ENCODE measurements at regions of chr1 and their contacts with region 1.

Region 1: GRCh38 chr1:16009030-16009709 is 5.1 kb downstream of the SRARP start:
- DNase-seq: peak; percentile 82 to 91 (median 89)
- H3K4me3 ChIP-seq: no peak overlapping the region
- H3K27ac ChIP-seq: no peak overlapping the region
- H3K4me1 ChIP-seq: peaks cover 7% of the 10 kb centered on the region
- H3K27me3 ChIP-seq: no peaks in the 10 kb centered on the region
- CTCF ChIP-seq: peak; percentile 84 to 98 (median 97)
- EP300 ChIP-seq: no peak
- POLR2A ChIP-seq: no peak

Region 2: GRCh38 chr1:16032388-16033103 is 23.4 kb after region 1 on chr1:
- intact Hi-C with region 1: loop called in 3 of 4 experiments (anchors 1 to 2 kb)
- DNase-seq: peak; percentile 88 to 92 (median 89)
- H3K4me3 ChIP-seq: no peak overlapping the region
- H3K27ac ChIP-seq: no peak overlapping the region
- H3K4me1 ChIP-seq: peaks cover 4% of the 10 kb centered on the region
- H3K27me3 ChIP-seq: no peaks in the 10 kb centered on the region
- CTCF ChIP-seq: peak; percentile 97 to 99 (median 98)
- EP300 ChIP-seq: no peak
- POLR2A ChIP-seq: no peak

Region 3: GRCh38 chr1:16048573-16049189 is 39.5 kb after region 1 on chr1:
- intact Hi-C with region 1: loop called in 1 of 4 experiments (anchors 5 kb)
- DNase-seq: peak; percentile 77 to 84 (median 81)
- H3K4me3 ChIP-seq: peak overlapping the region; percentile 27
- H3K27ac ChIP-seq: no peak overlapping the region
- H3K4me1 ChIP-seq: peaks cover 2% of the 10 kb centered on the region
- H3K27me3 ChIP-seq: no peaks in the 10 kb centered on the region
- CTCF ChIP-seq: no peak
- EP300 ChIP-seq: no peak
- POLR2A ChIP-seq: no peak

Region 4: GRCh38 chr1:16055613-16056520 is 46.7 kb after region 1 on chr1:
- intact Hi-C with region 1: loop called in 3 of 4 experiments (anchors 2 to 5 kb)
- DNase-seq: peak; percentile 82 to 91 (median 89)
- H3K4me3 ChIP-seq: no peak overlapping the region
- H3K27ac ChIP-seq: no peak overlapping the region
- H3K4me1 ChIP-seq: no peaks in the 10 kb centered on the region
- H3K27me3 ChIP-seq: no peaks in the 10 kb centered on the region
- CTCF ChIP-seq: peak; percentile 92 to 96 (median 96)
- EP300 ChIP-seq: no peak
- POLR2A ChIP-seq: no peak

Region 5: GRCh38 chr1:16145662-16146278 is 136.6 kb after region 1 on chr1:
- intact Hi-C with region 1: no loop called
- DNase-seq: peak; percentile 65 to 79 (median 69)
- H3K4me3 ChIP-seq: peak overlapping the region; percentile 25
- H3K27ac ChIP-seq: peak overlapping the region; percentile 26 to 75
- H3K4me1 ChIP-seq: peaks cover 21% of the 10 kb centered on the region
- H3K27me3 ChIP-seq: no peaks in the 10 kb centered on the region
- CTCF ChIP-seq: peak in 1 of 3 donors; percentile 4
- EP300 ChIP-seq: no peak
- POLR2A ChIP-seq: peak; percentile 8

Region 6: DNA sequence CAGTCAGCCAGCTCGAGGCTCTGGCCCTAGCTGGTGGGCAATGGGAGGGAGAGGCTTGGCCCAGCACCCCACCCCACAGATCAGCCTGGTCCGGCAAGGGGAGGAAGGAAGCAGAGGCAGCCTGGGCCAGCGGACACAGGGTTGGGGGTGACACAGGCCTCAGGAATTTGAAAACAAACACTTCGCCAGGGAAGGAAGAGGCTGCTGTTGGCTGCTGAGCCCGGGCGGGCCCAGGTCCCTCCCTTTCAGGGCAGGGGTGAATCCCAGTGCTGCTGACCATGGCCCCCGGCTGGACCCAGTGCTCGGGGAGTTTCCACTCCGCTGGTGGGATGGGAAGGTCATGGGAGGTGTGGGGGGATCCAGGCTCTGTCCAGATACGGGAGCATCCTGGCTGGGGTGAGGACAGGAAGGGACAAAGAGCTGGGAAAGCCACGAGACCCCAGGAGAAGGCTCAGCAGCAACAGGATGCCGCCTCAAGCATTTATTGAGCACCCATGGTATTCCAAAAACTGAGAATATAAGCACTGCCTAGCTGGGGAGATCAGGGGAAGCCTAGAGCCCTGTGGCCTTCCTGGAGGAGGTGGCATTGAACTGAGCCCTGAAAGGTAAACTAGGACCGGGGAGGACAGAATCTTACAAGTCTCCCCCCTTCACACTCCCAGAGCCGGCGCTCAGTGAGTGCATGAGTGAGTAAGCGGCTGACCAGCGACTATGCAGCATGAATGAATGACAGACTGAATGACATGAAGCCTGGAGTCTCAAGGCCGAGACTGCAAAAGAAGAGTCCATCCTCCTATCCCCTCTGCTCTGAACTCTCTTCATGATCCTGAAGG is 172.9 kb after region 1 on chr1:
- intact Hi-C with region 1: loop called in 1 of 4 experiments (anchors 5 kb)
- DNase-seq: peak; percentile 90 to 95 (median 92)
- H3K4me3 ChIP-seq: no peak overlapping the region
- H3K27ac ChIP-seq: peak overlapping the region; percentile 80 to 96
- H3K4me1 ChIP-seq: peaks cover 14% of the 10 kb centered on the region
- H3K27me3 ChIP-seq: no peaks in the 10 kb centered on the region
- CTCF ChIP-seq: no peak
- EP300 ChIP-seq: peak; percentile 46
- POLR2A ChIP-seq: peak; percentile 21

Measured in ovary (tissue), 10 donors.